Ascending aorta (tissue), 2 donors: ENCODE measurements at regions of chr6 and their contacts with region 1.

Region 1: GRCh38 chr6:131924881-131925474 is 26.2 kb downstream of the CCN2 start:
- DNase-seq: no peak
- H3K4me3 ChIP-seq: no peak overlapping the region
- H3K27ac ChIP-seq: no peak overlapping the region
- H3K4me1 ChIP-seq: no peaks in the 10 kb centered on the region
- H3K27me3 ChIP-seq: no peaks in the 10 kb centered on the region
- CTCF ChIP-seq: peak; percentile 50 to 74 (median 56)

Region 2: GRCh38 chr6:132161283-132161682 is 236.3 kb after region 1 on chr6:
- intact Hi-C with region 1: loop called (anchors 5 kb)
- DNase-seq: no peak
- H3K4me3 ChIP-seq: no peak overlapping the region
- H3K27ac ChIP-seq: no peak overlapping the region
- H3K4me1 ChIP-seq: no peaks in the 10 kb centered on the region
- H3K27me3 ChIP-seq: no peaks in the 10 kb centered on the region
- CTCF ChIP-seq: peak; percentile 44 to 56 (median 44)

Region 3: DNA sequence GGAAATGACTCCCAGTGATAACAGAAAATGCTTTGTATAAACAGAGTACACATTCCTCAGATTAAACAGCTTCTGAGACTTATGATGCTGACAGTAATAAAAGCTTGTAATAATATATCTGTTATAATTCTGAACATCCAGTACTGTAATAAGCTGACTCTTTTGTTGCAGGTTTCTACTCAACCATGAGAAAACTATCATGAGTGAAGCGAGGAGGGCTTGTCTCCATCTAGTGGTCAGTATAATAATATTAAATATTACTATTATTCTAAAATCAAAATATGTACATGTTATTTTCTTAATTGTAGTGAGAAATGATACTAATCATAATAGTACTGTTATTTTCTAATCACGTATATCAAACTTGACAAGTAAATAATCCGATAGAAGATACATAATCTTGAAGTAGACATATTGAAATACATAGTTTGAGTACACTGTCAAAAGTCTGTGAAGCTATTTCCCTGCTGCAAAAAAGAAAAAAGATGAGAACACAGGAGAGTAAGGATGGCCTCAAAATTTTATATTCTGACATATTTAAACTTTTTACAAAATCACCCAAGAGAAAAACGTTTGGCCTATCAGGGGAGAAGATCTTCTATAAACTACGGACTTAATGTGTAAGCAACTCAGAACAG is 293.2 kb after region 1 on chr6:
- intact Hi-C with region 1: loop called (anchors 2 kb)
- DNase-seq: no peak
- H3K4me3 ChIP-seq: no peak overlapping the region
- H3K27ac ChIP-seq: no peak overlapping the region
- H3K4me1 ChIP-seq: peaks cover 0 to 2% of the 10 kb centered on the region in 2 donors
- H3K27me3 ChIP-seq: no peaks in the 10 kb centered on the region
- CTCF ChIP-seq: peak; percentile 37 to 66 (median 63)

Region 4: GRCh38 chr6:132259070-132259469 is 334.1 kb after region 1 on chr6:
- intact Hi-C with region 1: loop called (anchors 2 kb)
- DNase-seq: no peak
- H3K4me3 ChIP-seq: no peak overlapping the region
- H3K27ac ChIP-seq: no peak overlapping the region
- H3K4me1 ChIP-seq: no peaks in the 10 kb centered on the region
- H3K27me3 ChIP-seq: no peaks in the 10 kb centered on the region
- CTCF ChIP-seq: peak in 2 of 3 experiments; percentile 37 to 46

Region 5: GRCh38 chr6:132483779-132484679 is 559.1 kb after region 1 on chr6:
- intact Hi-C with region 1: loop called (anchors 5 kb)
- DNase-seq: no peak
- H3K4me3 ChIP-seq: no peak overlapping the region
- H3K27ac ChIP-seq: no peak overlapping the region
- H3K4me1 ChIP-seq: peaks cover 0 to 12% of the 10 kb centered on the region in 2 donors
- H3K27me3 ChIP-seq: no peaks in the 10 kb centered on the region
- CTCF ChIP-seq: peak; percentile 60 to 78 (median 74)